SK-N-SH (cell line): ENCODE measurements at regions of chr7 and their contacts with region 1.

Region 1: DNA sequence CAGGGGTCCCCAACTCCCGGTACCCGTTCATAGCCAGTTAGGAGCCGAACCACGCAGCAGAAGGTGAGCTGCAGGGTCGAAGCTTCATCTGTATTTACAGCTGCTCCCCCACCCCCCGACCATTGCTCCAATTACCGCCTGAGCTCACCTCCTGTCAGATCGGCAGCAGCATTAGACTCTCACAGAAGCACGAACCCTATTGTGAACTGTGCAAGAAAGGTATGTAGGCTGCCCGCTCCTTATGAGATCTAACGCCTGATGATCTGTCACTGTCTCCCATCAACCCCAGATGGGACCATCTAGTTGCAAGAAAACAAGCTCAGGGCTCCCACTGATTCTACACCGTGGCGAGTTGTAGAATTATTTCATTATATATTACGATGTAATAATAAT is 14.6 kb upstream of the AZGP1 start:
- DNase-seq: no peak
- H3K4me3 ChIP-seq: no peak overlapping the region
- H3K27ac ChIP-seq: no peak overlapping the region
- H3K4me1 ChIP-seq: no peaks in the 10 kb centered on the region; a peak in 1 of 4 replicates
- H3K27me3 ChIP-seq: peaks cover 32% of the 10 kb centered on the region
- CTCF ChIP-seq: no peak
- EP300 ChIP-seq: no peak
- RAD21 ChIP-seq: no peak

Region 2: GRCh38 chr7:99499371-99499720 is 491.1 kb before region 1 on chr7:
- CTCF ChIA-PET with region 1: no interaction called
- POLR2A ChIA-PET with region 1: no interaction called
- DNase-seq: no peak
- H3K4me3 ChIP-seq: peak overlapping the region; percentile 65 to 80
- H3K27ac ChIP-seq: peak overlapping the region; percentile 75 to 87
- H3K4me1 ChIP-seq: peaks cover 9 to 10% of the 10 kb centered on the region in 2 experiments; a peak in 3 of 4 replicates
- H3K27me3 ChIP-seq: no peaks in the 10 kb centered on the region
- CTCF ChIP-seq: no peak
- EP300 ChIP-seq: no peak
- RAD21 ChIP-seq: no peak

Region 3: DNA sequence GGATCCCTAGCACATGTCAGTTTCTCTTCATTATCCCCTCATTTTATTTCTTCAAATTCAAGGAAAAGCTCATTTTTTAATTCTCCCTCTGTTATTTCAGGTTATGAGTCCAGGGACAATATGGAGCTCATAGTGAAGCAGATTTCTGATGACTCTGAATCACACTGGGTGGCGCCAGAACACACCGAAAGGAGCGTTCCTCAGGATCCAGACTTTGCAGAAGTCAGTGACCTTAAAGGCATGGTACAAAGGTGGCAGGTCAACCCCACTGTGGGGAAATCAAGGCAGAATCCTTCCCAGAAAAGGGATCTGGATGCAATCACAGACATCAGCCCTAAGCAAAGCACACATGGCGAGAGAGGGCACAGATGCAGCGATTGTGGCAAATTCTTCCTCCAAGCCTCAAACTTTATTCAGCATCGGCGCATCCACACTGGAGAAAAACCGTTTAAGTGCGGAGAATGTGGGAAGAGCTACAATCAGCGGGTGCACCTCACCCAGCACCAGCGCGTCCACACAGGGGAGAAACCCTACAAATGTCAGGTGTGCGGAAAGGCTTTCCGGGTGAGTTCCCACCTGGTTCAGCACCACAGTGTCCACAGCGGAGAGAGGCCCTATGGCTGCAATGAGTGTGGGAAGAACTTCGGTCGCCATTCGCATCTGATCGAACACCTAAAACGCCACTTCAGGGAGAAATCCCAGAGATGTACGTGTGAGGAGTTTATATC is 464.6 kb before region 1 on chr7:
- CTCF ChIA-PET with region 1: no interaction called
- POLR2A ChIA-PET with region 1: no interaction called
- DNase-seq: no peak
- H3K4me3 ChIP-seq: no peak overlapping the region
- H3K27ac ChIP-seq: no peak overlapping the region
- H3K4me1 ChIP-seq: no peaks in the 10 kb centered on the region
- H3K27me3 ChIP-seq: no peaks in the 10 kb centered on the region
- CTCF ChIP-seq: peak; percentile 58
- EP300 ChIP-seq: no peak
- RAD21 ChIP-seq: peak; percentile 69

Region 4: DNA sequence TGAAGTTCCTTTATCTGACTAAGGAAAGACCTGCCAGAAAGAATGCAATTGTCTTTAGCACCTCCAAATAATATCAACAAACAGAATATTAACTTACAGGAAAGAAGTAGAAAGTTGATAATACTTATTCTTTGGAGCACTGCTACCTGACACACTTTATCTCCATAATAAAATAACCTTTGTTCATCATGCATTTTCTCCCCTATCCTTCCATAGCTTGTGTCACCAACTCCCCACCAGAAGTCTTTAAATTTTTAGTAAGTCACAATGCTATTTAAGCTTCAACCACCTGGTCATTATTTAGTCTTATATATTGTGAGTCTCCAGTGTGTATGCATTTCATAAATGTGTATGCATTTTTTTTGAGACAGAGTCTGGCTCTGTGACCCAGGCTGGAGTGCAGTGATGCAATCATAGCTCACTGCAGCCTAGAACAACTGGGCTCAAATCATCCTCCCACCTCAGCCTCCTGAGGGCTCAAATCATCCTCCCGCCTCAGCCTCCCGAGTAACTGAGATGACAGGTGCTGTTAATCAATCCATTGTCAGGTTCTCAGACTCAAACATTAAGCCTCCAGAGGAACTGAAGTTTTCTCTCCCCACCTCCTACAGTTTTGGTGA is 169.9 kb before region 1 on chr7:
- CTCF ChIA-PET with region 1: no interaction called
- POLR2A ChIA-PET with region 1: no interaction called
- DNase-seq: no peak
- H3K4me3 ChIP-seq: no peak overlapping the region
- H3K27ac ChIP-seq: no peak overlapping the region
- H3K4me1 ChIP-seq: no peaks in the 10 kb centered on the region
- H3K27me3 ChIP-seq: peaks cover 16% of the 10 kb centered on the region; the same call in 1 of the 2 replicates
- CTCF ChIP-seq: no peak
- EP300 ChIP-seq: no peak
- RAD21 ChIP-seq: no peak

Region 5: GRCh38 chr7:99910976-99911375 is 79.5 kb before region 1 on chr7:
- CTCF ChIA-PET with region 1: interaction called, 85 read pairs
- POLR2A ChIA-PET with region 1: no interaction called
- DNase-seq: no peak
- H3K4me3 ChIP-seq: no peak overlapping the region
- H3K27ac ChIP-seq: no peak overlapping the region
- H3K4me1 ChIP-seq: no peaks in the 10 kb centered on the region
- H3K27me3 ChIP-seq: peaks cover 18% of the 10 kb centered on the region; the same call in 1 of the 2 replicates
- CTCF ChIP-seq: no peak
- EP300 ChIP-seq: no peak
- RAD21 ChIP-seq: no peak

Region 6: GRCh38 chr7:99928994-99929729 is 61.3 kb before region 1 on chr7 and contains the start of gene GJC3:
- CTCF ChIA-PET with region 1: interaction called, 14 read pairs
- POLR2A ChIA-PET with region 1: interaction called, 3 read pairs
- DNase-seq: peak; percentile 85
- H3K4me3 ChIP-seq: peak within 1 kb of the TSS; percentile 36 to 37; a peak in 2 of 4 replicates
- H3K27ac ChIP-seq: no peak within 1 kb of the TSS; a peak in 1 of 4 replicates
- H3K4me1 ChIP-seq: peaks cover 0 to 5% of the 10 kb centered on the region in 2 experiments; a peak in 1 of 4 replicates
- H3K27me3 ChIP-seq: peaks cover 39% of the 10 kb centered on the region; the same call in 1 of the 2 replicates
- CTCF ChIP-seq: peak; percentile 39
- EP300 ChIP-seq: no peak
- RAD21 ChIP-seq: peak; percentile 59
- polyA plus RNA-seq, gene GJC3: not detected in 2 replicates

Region 7: DNA sequence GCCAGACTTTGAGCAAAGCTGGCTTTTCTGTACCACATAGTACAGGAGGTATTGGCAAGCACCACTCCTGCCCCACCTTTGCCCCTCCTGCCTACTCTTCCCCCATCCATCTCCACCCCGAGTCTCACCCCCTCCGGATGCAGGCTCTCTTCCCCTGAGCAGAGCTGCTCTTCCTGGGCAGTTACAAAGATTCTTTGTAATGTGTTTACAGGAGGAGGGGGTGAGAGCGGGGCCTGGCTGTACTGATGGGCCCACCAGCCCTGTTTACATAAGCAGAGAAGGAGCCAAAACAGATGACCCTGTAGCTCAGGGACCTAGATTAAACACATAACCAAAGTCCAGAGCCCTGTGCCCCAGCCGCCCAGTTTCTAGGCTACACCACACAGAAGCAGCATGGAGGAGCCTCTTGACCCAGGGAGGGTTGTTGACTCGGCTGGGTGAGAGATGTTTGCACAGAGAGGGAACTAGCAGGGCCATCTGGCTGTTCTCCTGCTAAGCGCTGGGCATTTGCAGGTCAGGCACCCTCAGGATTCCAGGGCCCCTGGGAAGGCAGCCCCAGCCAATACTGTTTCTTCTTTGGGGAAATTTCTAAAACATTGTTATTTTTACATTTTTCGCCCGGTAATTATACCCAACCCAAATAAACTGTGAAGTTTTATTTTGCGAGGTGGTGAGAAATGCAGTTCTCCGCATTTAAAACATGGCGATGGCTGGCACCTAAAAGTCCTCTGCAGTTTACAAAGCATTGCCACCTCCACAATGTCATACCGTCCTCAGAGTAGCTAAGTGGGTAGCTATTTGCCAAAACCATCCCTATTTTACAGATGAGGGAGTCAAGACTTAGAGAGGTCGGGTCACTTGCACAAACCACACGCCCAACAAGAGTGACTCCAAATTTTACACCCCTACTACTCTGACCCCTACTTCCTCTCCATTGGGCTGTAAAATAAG is 13.5 kb after region 1 on chr7:
- CTCF ChIA-PET with region 1: interaction called, 28 read pairs
- POLR2A ChIA-PET with region 1: no interaction called
- DNase-seq: peak; percentile 36
- H3K4me3 ChIP-seq: no peak overlapping the region
- H3K27ac ChIP-seq: no peak overlapping the region
- H3K4me1 ChIP-seq: no peaks in the 10 kb centered on the region; a peak in 1 of 4 replicates
- H3K27me3 ChIP-seq: no peaks in the 10 kb centered on the region
- CTCF ChIP-seq: no peak
- EP300 ChIP-seq: no peak
- RAD21 ChIP-seq: no peak

Region 8: GRCh38 chr7:100081535-100082102 is 91.2 kb after region 1 on chr7 and contains the start of gene ZNF3:
- CTCF ChIA-PET with region 1: interaction called, 59 read pairs
- POLR2A ChIA-PET with region 1: interaction called, 4 read pairs
- DNase-seq: peak; percentile 99
- H3K4me3 ChIP-seq: peak within 1 kb of the TSS; percentile 67 to 94
- H3K27ac ChIP-seq: peak within 1 kb of the TSS; percentile 76 to 87
- H3K4me1 ChIP-seq: peaks cover 12 to 19% of the 10 kb centered on the region in 2 experiments; a peak in 3 of 4 replicates
- H3K27me3 ChIP-seq: no peaks in the 10 kb centered on the region
- CTCF ChIP-seq: peak; percentile 100
- EP300 ChIP-seq: peak; percentile 30 to 63; a peak in 3 of 4 replicates
- RAD21 ChIP-seq: peak; percentile 85
- polyA plus RNA-seq, gene ZNF3: 30.5 and 45.2 TPM in 2 replicates